K562 (cell line): ENCODE measurements at regions of chr10 and their contacts with region 1.

Region 1: DNA sequence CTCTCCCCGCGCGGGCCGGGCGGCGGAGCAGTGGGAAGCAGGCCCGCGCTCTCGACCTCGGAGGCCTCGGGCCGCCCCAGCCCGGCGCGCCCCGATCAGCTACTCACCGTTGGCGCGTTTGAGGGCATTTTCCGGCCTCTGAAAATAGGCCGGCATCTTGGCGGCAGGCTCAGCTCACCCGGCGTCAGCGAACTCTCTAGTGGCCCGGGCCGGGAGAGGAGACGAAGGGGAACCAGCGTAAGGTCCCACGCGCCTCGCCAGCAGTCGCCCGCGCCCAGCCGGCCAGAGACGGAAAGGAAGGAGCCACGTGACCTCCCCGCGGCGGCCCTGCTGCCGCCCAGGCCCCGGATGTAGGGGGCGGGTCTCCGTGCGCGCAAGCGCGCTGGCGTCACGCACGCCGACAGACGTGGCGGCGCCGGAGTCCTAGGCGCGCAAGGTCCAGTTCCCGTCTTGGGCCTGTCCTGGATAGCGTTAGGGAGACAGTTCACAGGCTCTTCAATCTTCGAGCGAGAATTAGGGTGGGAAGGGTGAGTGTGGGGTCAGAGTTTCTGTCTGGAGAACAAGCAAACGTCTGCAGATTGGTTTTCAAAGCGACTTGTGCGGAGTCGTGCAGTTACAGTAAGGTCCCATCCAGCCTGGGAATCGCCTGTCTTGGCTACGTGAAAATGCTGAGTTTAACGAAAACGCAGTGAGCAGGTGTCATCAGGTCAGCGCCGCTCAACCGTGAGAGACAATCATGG is at the start of gene EIF3A:
- DNase-seq: peak; percentile 87 to 93 (median 88)
- ATAC-seq: peak; percentile 88
- H3K4me3 ChIP-seq: peak within 1 kb of the TSS; percentile 92
- H3K27ac ChIP-seq: peak within 1 kb of the TSS; percentile 97
- H3K4me1 ChIP-seq: peaks cover 11 to 16% of the 10 kb centered on the region in 2 experiments; a peak in 4 of 5 replicates
- H3K27me3 ChIP-seq: no peaks in the 10 kb centered on the region
- CTCF ChIP-seq: no peak
- EP300 ChIP-seq: no peak; the same call in 1 of the 2 replicates
- POLR2A ChIP-seq: peak; percentile 92
- RAD21 ChIP-seq: 0 out of 4 replicates have a peak, but pooled peaks of 1 of the 2 experiments have one; percentile 2
- polyA plus RNA-seq, gene EIF3A: 19.6 to 35.1 TPM

Region 2: GRCh38 chr10:117537436-117537903 is 1543.2 kb before region 1 on chr10:
- CTCF ChIA-PET with region 1: no interaction called
- POLR2A ChIA-PET with region 1: no interaction called
- in situ Hi-C with region 1: no loop called
- intact Hi-C with region 1: no loop called
- DNase-seq: peak; percentile 30 to 77 (median 74)
- ATAC-seq: peak; percentile 90
- H3K4me3 ChIP-seq: no peak overlapping the region
- H3K27ac ChIP-seq: no peak overlapping the region
- H3K4me1 ChIP-seq: peaks cover 0 to 40% of the 10 kb centered on the region in 2 experiments; a peak in 2 of 5 replicates
- H3K27me3 ChIP-seq: peaks cover 15 to 90% of the 10 kb centered on the region in 2 experiments
- CTCF ChIP-seq: peak in 2 of 3 experiments; percentile 61 to 72
- EP300 ChIP-seq: no peak
- POLR2A ChIP-seq: no peak
- RAD21 ChIP-seq: peak; percentile 57 to 71

Region 3: GRCh38 chr10:119103903-119104652 is 23.4 kb after region 1 on chr10 and contains the start of gene DENND10:
- CTCF ChIA-PET with region 1: no interaction called
- POLR2A ChIA-PET with region 1: interaction called, 16 read pairs
- in situ Hi-C with region 1: no loop called
- intact Hi-C with region 1: no loop called
- DNase-seq: peak; percentile 77 to 99 (median 98)
- ATAC-seq: peak; percentile 94
- H3K4me3 ChIP-seq: peak within 1 kb of the TSS; percentile 64
- H3K27ac ChIP-seq: peak within 1 kb of the TSS; percentile 46; the same call in 2 of the 3 replicates
- H3K4me1 ChIP-seq: peaks cover 13 to 14% of the 10 kb centered on the region in 2 experiments; a peak in 4 of 5 replicates
- H3K27me3 ChIP-seq: no peaks in the 10 kb centered on the region
- CTCF ChIP-seq: no peak
- EP300 ChIP-seq: no peak
- POLR2A ChIP-seq: peak; percentile 75
- RAD21 ChIP-seq: no peak
- polyA plus RNA-seq, gene DENND10: 15.5 to 20.0 TPM

Region 4: GRCh38 chr10:119178372-119179119 is 97.9 kb after region 1 on chr10 and contains the start of gene PRDX3:
- CTCF ChIA-PET with region 1: no interaction called
- POLR2A ChIA-PET with region 1: no interaction called
- in situ Hi-C with region 1: no loop called
- intact Hi-C with region 1: loop called (anchors 5 kb)
- DNase-seq: peak; percentile 87 to 92 (median 90)
- ATAC-seq: peak; percentile 96
- H3K4me3 ChIP-seq: peak within 1 kb of the TSS; percentile 51
- H3K27ac ChIP-seq: peak within 1 kb of the TSS; percentile 89
- H3K4me1 ChIP-seq: peaks cover 17 to 27% of the 10 kb centered on the region in 2 experiments; a peak in 4 of 5 replicates
- H3K27me3 ChIP-seq: no peaks in the 10 kb centered on the region
- CTCF ChIP-seq: peak in 1 of 3 experiments; percentile 32; a peak in 1 of 6 replicates
- EP300 ChIP-seq: peak; percentile 21; the same call in 1 of the 2 replicates
- POLR2A ChIP-seq: peak; percentile 96
- RAD21 ChIP-seq: no peak
- polyA plus RNA-seq, gene PRDX3: 759 to 994 TPM